Left cardiac atrium (tissue), 4 donors: ENCODE measurements at regions of chr2 and their contacts with region 1.

Region 1: DNA sequence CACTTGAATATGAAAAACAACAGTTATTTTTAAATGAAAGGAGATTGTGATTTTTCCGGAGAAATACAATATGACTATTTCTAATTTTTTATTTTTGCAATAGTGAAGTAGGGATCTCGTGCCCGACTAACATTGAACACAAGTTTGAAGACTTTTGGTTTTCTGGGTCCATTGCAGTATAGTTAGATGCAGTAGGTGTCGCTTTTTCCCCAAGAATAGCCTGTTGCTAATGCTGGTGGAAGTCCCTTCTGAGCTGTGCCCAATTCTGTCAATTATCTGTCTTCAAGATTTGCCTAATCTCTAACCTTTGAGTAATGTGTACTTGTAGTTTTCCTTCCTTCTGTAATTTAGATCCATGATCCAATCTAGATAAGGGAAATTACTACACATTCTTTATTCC is 36.5 kb downstream of the SEMA4F start:
- DNase-seq: no peak
- ATAC-seq: peak; percentile 86 to 89

Region 2: GRCh38 chr2:74715078-74715791 is 24.7 kb after region 1 on chr2:
- intact Hi-C with region 1: loop called in 1 of 2 experiments (anchors 1 kb)
- DNase-seq: peak; percentile 80
- ATAC-seq: peak; percentile 85 to 97

Region 3: DNA sequence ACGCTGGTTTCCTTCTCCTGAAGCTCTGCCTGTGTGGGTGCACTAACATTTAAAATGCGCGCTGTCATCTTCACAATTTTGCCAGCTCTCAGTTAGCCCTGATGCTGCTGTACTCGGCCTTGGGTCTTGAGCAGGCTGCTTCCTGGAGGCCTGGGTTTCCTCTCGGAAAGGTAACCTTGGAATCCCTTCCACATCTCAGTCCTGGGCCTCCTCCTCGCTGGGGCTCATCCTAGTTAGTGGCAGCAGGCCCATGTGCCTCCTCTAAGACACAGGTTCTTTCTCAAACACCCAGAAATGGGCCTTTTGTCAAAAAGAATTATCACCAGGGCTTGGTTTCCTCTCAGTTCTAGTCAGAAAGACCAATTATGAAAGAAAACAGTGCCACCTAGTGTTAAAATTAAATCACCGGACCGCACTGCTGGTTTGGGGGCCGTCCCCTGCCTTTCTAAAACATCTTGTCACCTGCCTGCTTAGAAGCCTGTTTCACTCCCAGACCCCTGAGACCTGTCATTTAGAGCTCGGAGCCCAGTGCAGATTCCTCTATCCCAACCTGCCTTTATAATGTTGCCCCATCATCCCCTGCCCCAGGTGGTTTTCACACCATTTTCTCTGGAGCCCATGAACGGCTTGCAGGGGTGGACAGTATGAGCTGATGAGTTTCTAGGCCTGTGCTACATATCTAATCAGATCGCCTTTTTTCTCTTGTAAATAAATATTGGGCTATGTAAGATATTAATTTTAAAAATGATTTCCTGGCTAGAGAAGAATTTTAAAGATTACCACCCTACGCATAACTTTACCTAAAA is 185.7 kb after region 1 on chr2:
- intact Hi-C with region 1: loop called in 1 of 2 experiments (anchors 2 kb)
- DNase-seq: no peak
- ATAC-seq: peak; percentile 69 to 71

Region 4: DNA sequence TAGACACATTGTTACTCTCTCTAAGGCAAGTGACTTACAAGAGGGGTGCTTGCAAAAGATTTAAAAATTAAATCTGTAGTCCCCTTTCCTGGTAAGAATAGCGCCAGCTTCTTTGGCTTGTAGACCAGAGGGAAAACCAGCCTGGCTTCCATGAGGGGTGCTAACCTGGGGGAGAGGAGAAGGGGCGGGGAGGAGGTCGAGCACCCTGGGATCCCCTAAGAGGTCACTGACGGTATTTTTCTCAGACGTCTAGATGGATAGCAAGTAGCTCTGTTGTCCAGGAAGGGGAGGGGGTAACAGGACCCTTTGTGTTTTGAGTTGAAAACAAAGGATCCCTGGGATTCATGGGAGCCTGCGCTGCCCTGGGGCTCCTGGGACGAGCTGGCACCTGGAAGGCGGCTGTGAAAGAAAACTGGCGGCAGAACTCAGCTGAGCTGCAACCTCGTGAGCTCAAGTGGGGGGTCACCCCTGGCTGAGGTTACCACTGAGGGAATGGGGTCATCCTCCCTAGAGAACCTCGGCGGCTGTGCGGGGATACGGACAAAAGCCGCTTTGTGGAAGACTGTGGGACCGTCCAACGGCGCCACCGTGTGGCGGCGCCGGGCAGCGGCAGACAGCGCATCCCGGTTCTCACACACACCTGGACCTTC is 918.2 kb after region 1 on chr2:
- intact Hi-C with region 1: loop called in 1 of 2 experiments (anchors 5 kb)
- DNase-seq: peak; percentile 41
- ATAC-seq: peak; percentile 74 to 81

Region 5: GRCh38 chr2:75627895-75628504 is 937.4 kb after region 1 on chr2:
- intact Hi-C with region 1: loop called in 1 of 2 experiments (anchors 5 kb)
- DNase-seq: peak; percentile 69
- ATAC-seq: peak; percentile 54 to 73